ENCODE measurements at regions of chr10 and their contacts with region 1.

Region 1: GRCh38 chr10:91220194-91220953 is at the start of gene PCGF5:
- DNase-seq: peak; percentile 82 to 98 (median 90)
- ATAC-seq: peak; percentile 98
- H3K4me3 ChIP-seq: peak within 1 kb of the TSS; percentile 68
- H3K4me3 Mint-ChIP-seq: peak within 1 kb of the TSS; percentile 84 to 96 (median 90)
- H3K27ac ChIP-seq: peak within 1 kb of the TSS; percentile 90
- H3K27ac Mint-ChIP-seq: peak within 1 kb of the TSS; percentile 76 to 95 (median 89)
- H3K4me1 ChIP-seq: peaks cover 28 to 34% of the 10 kb centered on the region in 2 donors
- H3K4me1 Mint-ChIP-seq: peaks cover 33 to 69% (median 55%) of the 10 kb centered on the region in 7 donors
- H3K27me3 ChIP-seq: no peaks in the 10 kb centered on the region
- H3K27me3 Mint-ChIP-seq: no peaks in the 10 kb centered on the region
- total RNA-seq, gene PCGF5: 41.2 to 62.3 (median 57.4) TPM

Region 2: DNA sequence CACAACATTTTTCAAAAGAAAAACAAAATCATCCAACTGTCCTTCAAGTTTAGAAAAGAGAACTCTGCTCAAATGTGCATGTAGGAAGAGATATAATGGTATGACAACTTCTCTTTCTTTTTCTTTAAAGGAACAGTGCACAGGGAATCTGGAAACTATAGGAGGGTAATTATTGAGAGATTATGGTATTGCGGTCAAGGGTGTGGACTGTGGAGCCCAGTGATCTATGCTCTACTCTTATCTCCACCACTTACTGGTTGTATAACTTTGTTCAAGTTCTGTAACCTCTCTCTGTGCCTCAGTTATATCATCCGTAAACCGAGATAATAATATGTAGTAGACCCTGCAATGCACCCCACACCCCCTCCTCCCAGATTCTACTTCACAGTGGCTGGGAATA is 69.7 kb before region 1 on chr10:
- CTCF ChIA-PET with region 1: no interaction called
- POLR2A ChIA-PET with region 1: no interaction called
- intact Hi-C with region 1: no loop called
- DNase-seq: no peak
- ATAC-seq: no peak
- H3K4me3 ChIP-seq: no peak overlapping the region
- H3K4me3 Mint-ChIP-seq: no peak overlapping the region
- H3K27ac ChIP-seq: no peak overlapping the region
- H3K27ac Mint-ChIP-seq: no peak overlapping the region
- H3K4me1 ChIP-seq: no peaks in the 10 kb centered on the region
- H3K4me1 Mint-ChIP-seq: peaks cover 0 to 1% (median 0%) of the 10 kb centered on the region in 7 donors
- H3K27me3 ChIP-seq: no peaks in the 10 kb centered on the region
- H3K27me3 Mint-ChIP-seq: peaks cover 0 to 28% (median 11%) of the 10 kb centered on the region in 5 donors

Region 3: GRCh38 chr10:91172348-91172747 is 48.0 kb before region 1 on chr10:
- CTCF ChIA-PET with region 1: no interaction called
- POLR2A ChIA-PET with region 1: no interaction called
- intact Hi-C with region 1: no loop called
- DNase-seq: no peak
- ATAC-seq: peak; percentile 20
- H3K4me3 ChIP-seq: no peak overlapping the region
- H3K4me3 Mint-ChIP-seq: no peak overlapping the region
- H3K27ac ChIP-seq: no peak overlapping the region
- H3K27ac Mint-ChIP-seq: peak overlapping the region in 3 of 9 donors; percentile 7 to 54 (median 32)
- H3K4me1 ChIP-seq: no peaks in the 10 kb centered on the region
- H3K4me1 Mint-ChIP-seq: peaks cover 22 to 63% (median 57%) of the 10 kb centered on the region in 7 donors
- H3K27me3 ChIP-seq: no peaks in the 10 kb centered on the region
- H3K27me3 Mint-ChIP-seq: no peaks in the 10 kb centered on the region

Region 4: DNA sequence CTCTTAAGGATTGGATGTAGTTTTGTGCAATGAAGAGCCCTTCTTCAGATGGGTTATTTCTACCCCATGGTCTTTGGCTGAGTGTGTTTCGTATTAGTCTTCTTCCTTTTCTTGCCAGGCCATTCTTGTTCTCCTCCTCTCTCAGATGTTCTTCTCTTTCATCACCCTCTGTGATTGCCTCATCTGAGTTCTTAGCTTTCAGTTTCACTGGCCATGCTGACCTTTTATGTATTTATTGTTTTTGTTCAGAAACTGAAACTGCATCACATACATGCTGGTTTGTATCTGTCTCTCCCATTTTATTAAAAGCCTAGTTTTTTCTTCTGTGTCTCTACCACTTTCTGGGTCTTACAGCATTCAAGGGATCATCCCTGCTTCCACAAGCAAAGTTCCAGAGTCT is 21.6 kb before region 1 on chr10:
- CTCF ChIA-PET with region 1: no interaction called
- POLR2A ChIA-PET with region 1: interaction called, 5 read pairs
- intact Hi-C with region 1: loop called (anchors 1 kb)
- DNase-seq: peak in 5 of 9 donors; percentile 21 to 45 (median 28)
- ATAC-seq: peak; percentile 55
- H3K4me3 ChIP-seq: no peak overlapping the region
- H3K4me3 Mint-ChIP-seq: peak overlapping the region in 8 of 10 donors; percentile 9 to 82 (median 54)
- H3K27ac ChIP-seq: peak overlapping the region; percentile 59
- H3K27ac Mint-ChIP-seq: peak overlapping the region; percentile 44 to 94 (median 86)
- H3K4me1 ChIP-seq: peaks cover 55 to 57% of the 10 kb centered on the region in 2 donors
- H3K4me1 Mint-ChIP-seq: peaks cover 55 to 91% (median 86%) of the 10 kb centered on the region in 7 donors
- H3K27me3 ChIP-seq: no peaks in the 10 kb centered on the region
- H3K27me3 Mint-ChIP-seq: no peaks in the 10 kb centered on the region

Region 5: DNA sequence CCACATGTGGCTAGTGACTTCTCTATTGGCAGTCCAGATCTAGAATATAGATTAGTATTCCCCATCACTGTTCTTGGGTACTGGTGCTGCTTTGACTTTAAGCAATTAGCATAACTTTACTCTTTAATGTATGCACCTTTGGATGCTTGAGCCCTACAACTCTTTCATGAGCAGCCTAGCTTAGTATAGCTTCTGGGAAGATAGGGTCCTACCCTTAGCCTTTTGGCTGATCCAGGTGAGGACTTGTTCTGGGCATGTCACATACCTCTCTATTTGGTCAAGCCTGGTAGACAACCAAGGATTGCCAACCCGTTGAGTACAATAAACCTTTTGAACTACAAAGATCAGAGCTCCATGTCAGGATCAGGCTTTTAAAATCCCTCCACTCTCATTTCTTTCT is 17.8 kb after region 1 on chr10:
- CTCF ChIA-PET with region 1: no interaction called
- POLR2A ChIA-PET with region 1: no interaction called
- intact Hi-C with region 1: loop called in 1 of 2 experiments (anchors 2 kb)
- DNase-seq: no peak
- ATAC-seq: no peak
- H3K4me3 ChIP-seq: no peak overlapping the region
- H3K4me3 Mint-ChIP-seq: no peak overlapping the region
- H3K27ac ChIP-seq: no peak overlapping the region
- H3K27ac Mint-ChIP-seq: peak overlapping the region in 1 of 9 donors; percentile 13
- H3K4me1 ChIP-seq: no peaks in the 10 kb centered on the region
- H3K4me1 Mint-ChIP-seq: peaks cover 12 to 64% (median 27%) of the 10 kb centered on the region in 7 donors
- H3K27me3 ChIP-seq: no peaks in the 10 kb centered on the region
- H3K27me3 Mint-ChIP-seq: no peaks in the 10 kb centered on the region

Region 6: GRCh38 chr10:91409869-91410637 is 189.7 kb after region 1 on chr10 and contains the start of gene HECTD2:
- CTCF ChIA-PET with region 1: no interaction called
- POLR2A ChIA-PET with region 1: no interaction called
- intact Hi-C with region 1: loop called (anchors 1 kb)
- DNase-seq: peak; percentile 76 to 89 (median 86)
- ATAC-seq: peak; percentile 93
- H3K4me3 ChIP-seq: peak within 1 kb of the TSS; percentile 83
- H3K4me3 Mint-ChIP-seq: peak within 1 kb of the TSS; percentile 75 to 93 (median 90)
- H3K27ac ChIP-seq: peak within 1 kb of the TSS; percentile 88
- H3K27ac Mint-ChIP-seq: peak within 1 kb of the TSS; percentile 81 to 96 (median 91)
- H3K4me1 ChIP-seq: peaks cover 8 to 17% of the 10 kb centered on the region in 2 donors
- H3K4me1 Mint-ChIP-seq: peaks cover 8 to 18% (median 13%) of the 10 kb centered on the region in 7 donors
- H3K27me3 ChIP-seq: no peaks in the 10 kb centered on the region
- H3K27me3 Mint-ChIP-seq: peaks cover 0 to 27% (median 0%) of the 10 kb centered on the region in 5 donors
- total RNA-seq, gene HECTD2: 1.1 to 4.6 (median 2.0) TPM

Region 7: DNA sequence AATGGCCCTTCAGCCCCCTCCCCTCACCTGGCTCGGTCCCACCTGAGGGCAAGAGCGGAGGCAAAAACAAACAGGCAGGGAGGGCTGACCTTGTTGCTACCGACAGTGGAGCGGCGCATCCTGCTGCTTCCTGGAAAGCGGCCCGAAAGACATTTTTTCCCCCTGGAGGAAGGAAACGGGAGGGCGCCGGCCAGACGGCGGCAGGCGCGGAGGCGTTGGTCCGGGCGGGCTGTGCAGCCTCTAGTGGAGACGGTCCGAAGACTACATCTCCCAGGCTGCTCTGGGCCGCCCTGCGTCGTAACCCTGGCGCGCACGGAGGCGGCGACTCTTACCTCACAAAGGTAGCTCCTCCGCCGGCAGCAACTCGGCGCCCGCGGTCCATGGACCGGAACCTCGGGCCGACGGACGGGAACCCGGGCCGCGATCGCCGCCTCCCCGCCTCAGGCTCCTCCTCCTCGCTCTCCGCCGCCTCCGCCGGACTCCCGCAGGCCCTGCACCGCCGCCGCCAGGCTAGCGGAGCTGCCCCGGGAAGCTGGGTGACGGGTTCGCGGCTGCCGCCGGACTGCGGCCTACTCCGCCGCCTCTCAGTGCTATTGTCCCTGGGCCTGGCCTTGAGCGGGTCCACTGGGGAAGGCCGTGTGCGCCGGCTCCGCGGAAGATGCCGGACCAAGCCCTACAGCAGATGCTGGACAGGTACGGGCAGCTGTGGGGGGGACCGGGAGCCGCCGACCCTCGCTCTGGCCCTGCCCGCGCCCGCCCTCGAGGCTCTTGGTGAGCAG is 1070.7 kb after region 1 on chr10 and contains the starts of genes CPEB3 and MARCHF5:
- CTCF ChIA-PET with region 1: no interaction called
- POLR2A ChIA-PET with region 1: no interaction called
- intact Hi-C with region 1: loop called in 1 of 2 experiments (anchors 5 kb)
- DNase-seq: peak; percentile 77 to 92 (median 85)
- ATAC-seq: peak; percentile 99
- H3K4me3 ChIP-seq: peak within 1 kb of the TSS; percentile 90
- H3K4me3 Mint-ChIP-seq: peak within 1 kb of the TSS; percentile 85 to 97 (median 95)
- H3K27ac ChIP-seq: peak within 1 kb of the TSS; percentile 90
- H3K27ac Mint-ChIP-seq: peak within 1 kb of the TSS; percentile 75 to 96 (median 88)
- H3K4me1 ChIP-seq: peaks cover 0 to 6% of the 10 kb centered on the region in 2 donors
- H3K4me1 Mint-ChIP-seq: peaks cover 21 to 41% (median 31%) of the 10 kb centered on the region in 7 donors
- H3K27me3 ChIP-seq: no peaks in the 10 kb centered on the region
- H3K27me3 Mint-ChIP-seq: no peaks in the 10 kb centered on the region
- total RNA-seq, gene CPEB3: 2.0 to 3.3 (median 2.2) TPM
- total RNA-seq, gene MARCHF5: 22.0 to 37.1 (median 33.8) TPM

Measured in naive thymus-derived CD4-positive, alpha-beta T cell (primary cell).